ENCODE measurements at regions of chr10 and their contacts with region 1.

Region 1: GRCh38 chr10:97025613-97026242 is 160.0 kb downstream of the SLIT1 start:
- DNase-seq: peak; percentile 39 to 70
- ATAC-seq: peak; percentile 64 to 76 (median 66)
- H3K4me3 ChIP-seq: no peak overlapping the region
- H3K27ac ChIP-seq: peak overlapping the region; percentile 91
- H3K4me1 ChIP-seq: peaks cover 24% of the 10 kb centered on the region
- H3K27me3 ChIP-seq: no peaks in the 10 kb centered on the region
- CTCF ChIP-seq: peak; percentile 75

Region 2: DNA sequence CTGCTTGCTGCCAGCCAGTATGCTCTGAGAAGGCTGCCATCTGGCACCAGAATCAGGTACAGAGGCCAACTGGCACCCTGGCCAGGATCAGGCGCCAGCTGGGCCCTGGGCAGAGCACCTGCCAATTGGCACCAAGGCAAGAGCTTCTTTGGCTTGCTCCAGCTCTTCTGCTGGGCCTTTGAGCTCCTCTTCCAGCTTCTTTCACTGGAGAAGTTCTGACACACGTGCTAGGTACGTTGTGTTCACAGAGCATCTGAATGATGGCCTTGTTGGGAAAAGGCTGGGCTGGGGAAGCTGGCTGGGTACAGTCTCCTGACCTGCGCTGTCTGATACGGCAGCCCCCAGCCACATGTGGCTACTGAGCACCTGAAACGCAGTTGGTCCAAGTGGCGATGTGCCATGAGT is 635.3 kb before region 1 on chr10:
- intact Hi-C with region 1: loop called (anchors 5 to 10 kb)
- DNase-seq: peak; percentile 72 to 93
- ATAC-seq: peak; percentile 96 to 99 (median 98)
- H3K4me3 ChIP-seq: no peak overlapping the region
- H3K27ac ChIP-seq: no peak overlapping the region
- H3K4me1 ChIP-seq: peaks cover 13% of the 10 kb centered on the region
- H3K27me3 ChIP-seq: peaks cover 0 to 2% (median 0%) of the 10 kb centered on the region in 3 donors
- CTCF ChIP-seq: no peak

Region 3: DNA sequence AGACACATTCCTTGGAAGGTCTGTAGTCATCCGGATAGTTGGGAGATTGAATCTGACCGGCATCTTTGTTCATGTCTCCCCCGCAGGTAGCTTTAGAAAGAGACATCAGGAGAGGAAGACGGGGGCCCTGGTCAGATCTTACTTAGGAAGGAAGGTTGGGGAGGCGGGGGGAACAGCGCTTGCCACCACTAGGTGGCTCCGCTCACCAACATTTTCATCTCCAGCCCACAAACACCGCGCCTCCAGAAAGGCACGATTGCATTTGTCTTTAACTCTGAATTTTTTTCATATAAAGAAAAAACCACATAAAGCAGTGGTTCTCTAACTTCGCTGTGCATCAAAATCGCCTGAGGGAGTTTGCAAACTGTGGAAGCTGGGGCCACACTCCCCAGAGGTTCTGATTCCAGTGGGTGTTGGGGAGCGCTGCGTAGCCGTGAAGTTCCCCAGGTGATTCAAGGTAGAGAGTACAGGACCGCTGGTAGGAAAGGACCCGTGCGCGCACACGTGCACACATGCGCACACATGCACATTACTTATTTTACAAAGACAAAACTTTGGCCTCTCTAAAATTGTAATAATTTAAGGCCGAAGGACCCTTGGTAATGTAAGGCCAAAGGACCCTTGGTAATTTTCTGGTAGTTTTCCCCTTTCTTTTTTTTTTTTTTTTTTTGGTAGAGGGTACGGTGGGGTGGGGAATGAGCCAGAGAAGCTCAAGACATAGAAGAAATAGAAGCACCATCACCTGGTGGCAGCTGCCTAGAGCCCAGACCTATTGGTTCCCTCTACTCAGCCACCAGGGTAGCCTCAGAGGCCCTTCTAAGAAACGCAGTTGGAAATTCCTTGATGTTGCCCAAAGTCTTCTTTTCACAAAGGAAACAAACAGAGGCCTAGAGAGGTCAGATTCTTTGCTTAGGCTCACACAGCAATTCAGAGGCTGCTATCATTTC is 629.5 kb before region 1 on chr10:
- intact Hi-C with region 1: loop called (anchors 5 to 10 kb)
- DNase-seq: peak; percentile 56 to 80
- ATAC-seq: peak; percentile 75 to 94 (median 83)
- H3K4me3 ChIP-seq: no peak overlapping the region
- H3K27ac ChIP-seq: no peak overlapping the region
- H3K4me1 ChIP-seq: no peaks in the 10 kb centered on the region
- H3K27me3 ChIP-seq: peaks cover 0 to 2% (median 0%) of the 10 kb centered on the region in 3 donors
- CTCF ChIP-seq: peak; percentile 86

Region 4: DNA sequence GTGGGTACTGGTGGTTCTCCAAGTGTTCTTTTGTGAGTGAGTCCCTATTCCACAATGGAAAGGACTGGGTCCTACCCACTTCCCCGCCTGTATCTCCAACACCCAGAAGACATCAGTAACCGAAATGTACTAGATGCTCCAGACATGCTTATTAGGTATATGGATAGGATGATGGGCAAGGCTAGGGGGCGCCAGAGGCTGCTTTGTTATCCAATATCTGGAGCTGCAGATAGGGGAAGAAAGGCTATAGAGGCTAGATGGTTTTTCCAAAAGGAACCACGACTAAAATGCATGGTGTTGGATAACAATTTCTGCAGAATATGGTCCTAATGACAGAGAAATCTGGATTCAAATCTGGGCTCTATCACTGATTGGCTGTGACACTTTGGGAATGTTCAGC is 382.8 kb before region 1 on chr10:
- intact Hi-C with region 1: loop called in 1 of 2 experiments (anchors 10 kb)
- DNase-seq: peak; percentile 60 to 80
- ATAC-seq: peak in 2 of 4 donors; percentile 59 to 69
- H3K4me3 ChIP-seq: no peak overlapping the region
- H3K27ac ChIP-seq: no peak overlapping the region
- H3K4me1 ChIP-seq: no peaks in the 10 kb centered on the region
- H3K27me3 ChIP-seq: no peaks in the 10 kb centered on the region
- CTCF ChIP-seq: peak; percentile 44

Region 5: DNA sequence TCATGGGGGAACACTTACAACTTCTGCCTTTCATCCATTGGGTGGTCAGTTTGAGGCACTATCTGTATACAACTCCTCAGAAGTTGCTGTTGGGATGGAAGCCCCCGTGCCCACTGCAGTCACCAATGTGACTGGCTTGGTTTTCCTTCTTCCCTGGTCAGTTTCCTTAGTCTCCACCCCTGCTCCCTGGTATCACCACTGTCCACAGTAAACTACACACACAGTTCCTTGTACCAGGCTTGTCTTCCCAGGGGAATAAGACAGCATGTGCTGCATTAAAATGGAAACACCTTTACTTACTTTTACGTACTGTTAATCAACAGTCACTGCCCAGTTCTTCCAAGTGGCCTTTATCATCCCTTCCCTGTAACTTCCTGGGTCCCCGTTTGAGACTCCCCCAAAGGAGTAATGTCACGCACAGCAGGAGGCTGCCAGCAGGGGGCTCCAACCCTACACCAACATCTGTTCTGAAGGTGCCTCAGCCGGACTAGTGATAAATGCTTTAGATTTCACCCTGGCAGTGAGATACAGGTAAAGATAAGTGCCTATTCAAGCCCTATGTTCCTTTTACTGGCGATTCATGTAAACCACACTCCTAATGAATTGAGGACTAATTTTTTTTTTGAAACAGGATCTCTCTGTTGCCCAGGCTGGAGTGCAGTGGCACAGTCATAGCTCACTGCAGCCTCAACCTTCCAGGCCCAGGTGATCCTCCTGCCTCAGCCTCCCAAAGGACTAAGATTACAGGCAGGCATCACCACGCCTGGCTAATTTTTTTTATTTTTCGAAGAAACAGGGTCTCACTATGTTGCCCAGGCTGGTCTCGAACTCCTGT is 260.1 kb before region 1 on chr10:
- intact Hi-C with region 1: loop called (anchors 5 to 10 kb)
- DNase-seq: peak; percentile 54 to 77
- ATAC-seq: peak; percentile 52 to 85 (median 76)
- H3K4me3 ChIP-seq: no peak overlapping the region
- H3K27ac ChIP-seq: no peak overlapping the region
- H3K4me1 ChIP-seq: no peaks in the 10 kb centered on the region
- H3K27me3 ChIP-seq: no peaks in the 10 kb centered on the region
- CTCF ChIP-seq: peak; percentile 66

Region 6: DNA sequence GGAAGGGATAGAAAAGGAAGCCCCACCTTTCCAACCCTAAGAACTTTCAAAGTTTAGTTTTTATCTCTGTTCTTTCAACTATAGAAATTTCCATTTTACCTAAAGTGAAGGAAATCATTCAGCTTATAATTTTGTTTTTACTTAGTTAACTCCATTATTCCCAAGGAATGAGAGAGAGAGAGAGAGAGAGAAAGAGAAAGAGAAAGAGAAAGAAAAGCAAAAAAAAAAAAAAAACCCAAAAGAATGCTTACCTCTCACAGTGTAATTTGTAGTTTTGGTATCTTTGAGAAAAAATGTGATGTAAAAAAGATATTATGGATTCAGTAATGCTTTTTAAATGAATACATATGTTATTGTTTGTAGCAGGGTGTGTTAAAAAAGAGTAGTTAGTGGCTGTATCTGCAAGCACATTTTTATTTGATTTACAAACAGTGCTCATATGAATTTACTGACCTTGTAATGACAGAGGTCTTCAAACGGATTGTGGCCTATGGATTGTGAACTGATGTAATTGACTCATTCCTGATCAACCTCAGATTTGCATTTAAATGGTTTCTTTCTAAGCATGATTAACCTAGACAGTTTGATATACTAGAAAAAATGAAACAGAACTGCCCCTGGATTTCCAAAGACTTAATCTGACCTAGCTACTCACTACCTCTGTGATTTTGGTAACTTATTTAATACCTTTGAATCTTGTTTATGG is 128.7 kb before region 1 on chr10:
- intact Hi-C with region 1: no loop called
- DNase-seq: no peak
- ATAC-seq: no peak
- H3K4me3 ChIP-seq: no peak overlapping the region
- H3K27ac ChIP-seq: no peak overlapping the region
- H3K4me1 ChIP-seq: peaks cover 37% of the 10 kb centered on the region
- H3K27me3 ChIP-seq: no peaks in the 10 kb centered on the region
- CTCF ChIP-seq: no peak

Region 7: GRCh38 chr10:96910488-96911395 is 115.0 kb before region 1 on chr10:
- intact Hi-C with region 1: loop called (anchors 2 to 5 kb)
- DNase-seq: no peak
- ATAC-seq: peak; percentile 65 to 86 (median 82)
- H3K4me3 ChIP-seq: no peak overlapping the region
- H3K27ac ChIP-seq: peak overlapping the region; percentile 33
- H3K4me1 ChIP-seq: peaks cover 43% of the 10 kb centered on the region
- H3K27me3 ChIP-seq: no peaks in the 10 kb centered on the region
- CTCF ChIP-seq: peak; percentile 69

Region 8: DNA sequence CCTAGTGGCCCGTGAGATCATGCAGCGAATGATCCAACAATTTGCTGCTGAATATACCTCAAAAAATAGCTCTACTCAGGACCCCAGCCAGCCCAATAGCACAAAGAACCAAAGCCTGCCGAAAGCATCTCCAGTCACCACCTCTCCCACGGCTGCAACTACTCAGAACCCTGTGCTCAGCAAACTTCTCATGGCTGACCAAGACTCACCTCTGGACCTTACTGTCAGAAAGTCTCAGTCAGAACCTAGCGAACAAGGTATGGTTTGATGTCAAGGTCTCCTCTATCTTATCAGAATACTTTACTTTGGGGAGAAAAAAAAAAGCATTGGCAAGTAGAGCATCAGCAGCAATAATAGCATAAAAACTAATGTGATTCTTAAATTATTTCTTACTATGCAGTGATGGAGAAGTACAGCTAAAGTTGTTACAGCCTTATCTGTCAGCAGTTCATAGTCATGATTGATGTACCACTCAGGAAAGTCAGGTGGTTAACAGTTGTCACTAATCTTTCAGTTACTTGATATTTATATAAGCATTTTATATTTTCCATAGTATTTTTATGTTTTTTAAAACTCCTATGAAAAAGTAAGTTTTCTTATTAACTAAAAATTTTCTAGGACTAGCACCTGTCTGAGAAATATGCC is 76.6 kb before region 1 on chr10:
- intact Hi-C with region 1: no loop called
- DNase-seq: no peak
- ATAC-seq: peak; percentile 51 to 66 (median 62)
- H3K4me3 ChIP-seq: no peak overlapping the region
- H3K27ac ChIP-seq: peak overlapping the region; percentile 43
- H3K4me1 ChIP-seq: peaks cover 58% of the 10 kb centered on the region
- H3K27me3 ChIP-seq: no peaks in the 10 kb centered on the region
- CTCF ChIP-seq: no peak

Measured in psoas muscle (tissue), 8 donors.